ENCODE measurements at regions of chr1 and their contacts with region 1.

Region 1: GRCh38 chr1:168893359-168893801 is 164.4 kb upstream of the DPT start:
- DNase-seq: peak; percentile 60 to 84
- ATAC-seq: peak; percentile 96 to 98 (median 97)
- H3K4me3 ChIP-seq: peak overlapping the region; percentile 37
- H3K27ac ChIP-seq: peak overlapping the region; percentile 84
- H3K4me1 ChIP-seq: peaks cover 12% of the 10 kb centered on the region
- H3K27me3 ChIP-seq: no peaks in the 10 kb centered on the region
- CTCF ChIP-seq: no peak

Region 2: DNA sequence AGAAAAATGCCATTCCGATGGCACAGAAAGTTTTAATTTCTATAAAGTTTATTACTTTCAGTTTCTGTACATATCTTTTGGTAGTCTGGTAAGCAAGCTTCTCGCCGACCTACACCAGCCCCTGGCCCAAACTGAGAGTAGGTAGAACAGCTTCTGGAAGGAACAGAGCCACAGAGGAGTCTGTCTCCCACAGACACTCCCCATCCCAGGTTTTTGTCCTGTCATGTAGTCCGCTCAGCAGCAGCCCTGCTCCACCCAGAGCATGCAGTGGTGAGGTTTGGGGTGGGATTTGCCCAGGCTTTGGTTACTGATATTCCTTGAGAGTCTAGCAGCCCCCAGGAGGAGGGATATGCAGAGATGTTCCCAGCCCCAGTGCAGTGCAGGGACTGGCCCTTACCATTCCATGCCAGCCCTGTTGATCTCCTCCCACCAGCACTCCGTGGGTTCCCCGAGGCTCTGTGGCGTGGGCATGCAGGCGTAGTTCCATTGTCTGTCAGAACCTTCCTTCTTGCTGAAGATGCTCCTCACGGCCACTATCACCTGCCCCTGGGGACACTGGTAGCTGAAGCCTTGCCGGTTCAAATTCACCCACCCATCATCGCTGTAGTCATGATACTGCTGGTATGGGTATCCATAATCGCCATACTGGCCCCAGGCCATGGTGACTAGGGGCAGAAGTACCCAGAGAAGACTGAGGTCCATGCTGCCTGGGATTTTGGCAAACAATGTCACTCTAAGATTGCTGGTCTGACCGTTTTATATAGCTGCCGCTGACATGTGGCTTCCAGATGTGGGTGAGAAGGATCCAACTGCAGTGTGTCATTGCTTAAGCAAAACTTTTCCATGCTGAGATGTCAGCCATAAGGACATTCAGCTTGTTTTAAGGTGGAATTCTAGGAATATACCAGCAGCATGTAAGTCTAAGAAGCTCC is 164.6 kb before region 1 on chr1 and contains the start of gene DPT:
- intact Hi-C with region 1: loop called in 1 of 2 experiments (anchors 5 kb)
- DNase-seq: peak; percentile 47 to 63
- ATAC-seq: peak; percentile 21 to 74 (median 57)
- H3K4me3 ChIP-seq: peak within 1 kb of the TSS; percentile 40
- H3K27ac ChIP-seq: peak within 1 kb of the TSS; percentile 33
- H3K4me1 ChIP-seq: peaks cover 9% of the 10 kb centered on the region
- H3K27me3 ChIP-seq: no peaks in the 10 kb centered on the region
- CTCF ChIP-seq: no peak
- total RNA-seq, gene DPT: 8.5 to 39.4 (median 10.8) TPM

Measured in psoas muscle (tissue), 8 donors.